Posterior vena cava (tissue), 2 donors: ENCODE measurements at regions of chr2 and their contacts with region 1.

Region 1: GRCh38 chr2:21643180-21643579 is 519.4 kb downstream of the TDRD15 start:
- DNase-seq: no peak

Region 2: GRCh38 chr2:22683914-22684313 is 1040.7 kb after region 1 on chr2:
- intact Hi-C with region 1: loop called in 1 of 2 experiments (anchors 5 kb)
- DNase-seq: no peak